ENCODE measurements at regions of chr12 and their contacts with region 1.

Region 1: DNA sequence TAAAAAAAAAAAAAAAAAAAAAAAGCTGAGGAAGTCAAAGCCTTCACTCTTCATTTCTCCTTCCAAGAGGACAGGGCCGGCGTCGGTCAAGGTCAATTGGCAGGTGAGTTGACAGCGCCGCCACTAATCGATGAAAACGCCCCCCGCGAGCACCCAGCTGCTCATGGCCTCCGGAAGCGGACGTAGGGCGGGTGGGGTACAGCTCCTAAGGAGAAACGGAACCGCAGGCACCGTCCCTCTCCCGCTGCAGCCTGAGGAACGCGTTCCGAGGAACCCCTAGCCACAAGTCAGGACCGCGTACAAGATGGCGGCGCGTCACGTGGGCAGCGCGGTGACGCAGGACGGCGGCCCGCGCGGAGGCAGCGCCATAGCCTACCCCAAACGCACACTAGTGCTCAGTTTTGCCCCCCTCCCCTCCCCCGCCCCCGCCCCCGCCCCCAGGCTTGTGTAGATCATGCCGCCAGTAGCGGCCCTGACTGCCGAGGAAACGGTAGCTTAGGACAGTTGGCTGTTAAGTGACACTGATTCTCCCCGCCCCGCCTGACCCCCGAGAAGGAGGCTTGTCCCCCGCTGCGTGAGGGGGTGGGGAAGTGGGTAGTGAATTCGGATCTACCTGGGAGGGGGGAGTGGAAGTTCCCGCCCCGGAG is at the start of gene ATF1:
- DNase-seq: peak; percentile 93 to 94 (median 93)
- H3K4me3 ChIP-seq: peak within 1 kb of the TSS; percentile 72 to 97 (median 91)
- H3K4me3 Mint-ChIP-seq: peak within 1 kb of the TSS; percentile 90 to 94
- H3K27ac ChIP-seq: peak within 1 kb of the TSS; percentile 92 to 99
- H3K27ac Mint-ChIP-seq: peak within 1 kb of the TSS; percentile 96 to 99 (median 99)
- H3K4me1 ChIP-seq: peaks cover 33 to 48% of the 10 kb centered on the region in 2 donors
- H3K4me1 Mint-ChIP-seq: peaks cover 36% of the 10 kb centered on the region
- H3K27me3 ChIP-seq: no peaks in the 10 kb centered on the region
- H3K27me3 Mint-ChIP-seq: peaks cover 0 to 2% (median 1%) of the 10 kb centered on the region in 3 donors
- CTCF ChIP-seq: no peak
- polyA plus RNA-seq, gene ATF1: 12.6 to 21.9 (median 21.5) TPM

Region 2: DNA sequence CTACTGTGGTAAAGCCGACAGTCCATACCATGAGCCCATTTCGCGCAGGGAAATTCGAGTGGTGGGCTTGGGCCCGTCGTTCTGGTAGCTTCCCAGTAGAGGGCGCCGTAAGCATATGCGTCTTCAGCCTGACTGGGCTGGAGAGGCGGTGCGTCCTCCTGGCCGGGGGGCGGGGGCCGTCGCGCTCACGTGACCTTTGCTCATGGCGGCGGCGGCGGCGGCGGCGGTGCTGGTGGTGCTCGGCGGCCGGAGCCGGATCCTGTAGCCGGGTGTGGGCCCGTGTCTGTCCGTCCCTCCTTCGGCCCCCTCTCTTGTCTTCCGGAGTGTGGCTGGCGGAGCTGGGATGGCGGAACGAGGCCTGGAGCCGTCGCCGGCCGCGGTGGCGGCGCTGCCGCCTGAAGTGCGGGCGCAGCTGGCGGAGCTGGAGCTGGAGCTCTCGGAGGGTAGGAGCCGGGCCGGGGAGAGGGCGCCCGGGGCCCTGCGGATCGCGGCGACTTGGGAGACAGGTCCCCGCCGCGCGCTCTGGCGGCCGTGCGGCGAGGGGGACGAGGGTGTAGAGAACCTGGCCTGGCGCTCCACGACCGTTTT is 258.9 kb before region 1 on chr12 and contains the start of gene DIP2B:
- intact Hi-C with region 1: loop called in 1 of 2 experiments (anchors 10 kb)
- DNase-seq: peak; percentile 91 to 95 (median 94)
- H3K4me3 ChIP-seq: peak within 1 kb of the TSS; percentile 70 to 95 (median 93)
- H3K4me3 Mint-ChIP-seq: peak within 1 kb of the TSS; percentile 91 to 97
- H3K27ac ChIP-seq: peak within 1 kb of the TSS; percentile 82 to 92
- H3K27ac Mint-ChIP-seq: peak within 1 kb of the TSS; percentile 89 to 96 (median 93)
- H3K4me1 ChIP-seq: peaks cover 43 to 45% of the 10 kb centered on the region in 2 donors
- H3K4me1 Mint-ChIP-seq: peaks cover 44% of the 10 kb centered on the region
- H3K27me3 ChIP-seq: no peaks in the 10 kb centered on the region
- H3K27me3 Mint-ChIP-seq: no peaks in the 10 kb centered on the region
- CTCF ChIP-seq: peak; percentile 90
- polyA plus RNA-seq, gene DIP2B: 3.5 to 12.3 (median 6.5) TPM

Region 3: DNA sequence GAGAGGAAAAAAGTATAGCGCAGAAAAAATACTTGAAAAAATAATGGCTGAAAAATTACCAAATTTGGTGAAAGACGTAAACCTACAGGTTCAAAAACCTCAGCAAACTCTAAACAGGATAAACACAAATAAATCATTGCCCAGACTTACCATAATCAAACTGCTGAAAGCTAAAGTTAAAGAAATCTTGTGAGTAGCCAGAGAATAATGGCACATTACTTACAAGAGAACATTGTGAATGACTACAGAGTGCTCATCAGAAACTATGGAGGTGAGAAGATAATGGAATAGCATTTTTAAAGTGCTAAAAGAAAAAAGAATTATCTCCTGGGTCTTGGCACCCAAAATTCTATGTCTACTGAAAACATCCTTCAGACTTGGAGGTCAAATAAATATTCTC is 36.1 kb after region 1 on chr12:
- intact Hi-C with region 1: no loop called
- DNase-seq: no peak
- H3K4me3 ChIP-seq: no peak overlapping the region
- H3K4me3 Mint-ChIP-seq: no peak overlapping the region
- H3K27ac ChIP-seq: no peak overlapping the region
- H3K27ac Mint-ChIP-seq: no peak overlapping the region
- H3K4me1 ChIP-seq: no peaks in the 10 kb centered on the region
- H3K4me1 Mint-ChIP-seq: no peaks in the 10 kb centered on the region
- H3K27me3 ChIP-seq: no peaks in the 10 kb centered on the region
- H3K27me3 Mint-ChIP-seq: peaks cover 0 to 1% (median 0%) of the 10 kb centered on the region in 3 donors
- CTCF ChIP-seq: no peak

Region 4: GRCh38 chr12:50822082-50822481 is 58.3 kb after region 1 on chr12:
- intact Hi-C with region 1: no loop called
- DNase-seq: no peak
- H3K4me3 ChIP-seq: no peak overlapping the region
- H3K4me3 Mint-ChIP-seq: no peak overlapping the region
- H3K27ac ChIP-seq: no peak overlapping the region
- H3K27ac Mint-ChIP-seq: peak overlapping the region in 1 of 7 donors; percentile 75
- H3K4me1 ChIP-seq: peaks cover 0 to 3% of the 10 kb centered on the region in 2 donors
- H3K4me1 Mint-ChIP-seq: peaks cover 5% of the 10 kb centered on the region
- H3K27me3 ChIP-seq: no peaks in the 10 kb centered on the region
- H3K27me3 Mint-ChIP-seq: no peaks in the 10 kb centered on the region
- CTCF ChIP-seq: no peak

Region 5: DNA sequence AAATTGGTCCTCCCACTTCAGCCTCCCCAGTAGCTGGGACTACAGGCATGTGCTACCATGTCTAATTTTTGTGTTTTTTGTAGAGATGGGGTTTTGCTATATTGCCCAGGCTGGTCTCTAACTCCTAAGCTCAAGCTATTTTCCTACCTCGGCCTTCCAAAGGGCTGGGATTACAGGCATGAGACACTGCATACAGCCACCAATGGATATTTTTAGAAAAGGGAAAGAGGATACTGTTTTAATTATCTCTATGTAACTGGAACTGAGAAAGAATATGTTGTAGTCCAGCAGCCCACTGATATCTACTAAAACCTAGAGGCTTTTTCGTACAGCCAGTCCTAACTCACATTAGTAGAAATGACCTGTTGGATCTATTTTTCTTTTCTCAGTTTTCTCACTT is 85.2 kb after region 1 on chr12:
- intact Hi-C with region 1: no loop called
- DNase-seq: no peak
- H3K4me3 ChIP-seq: no peak overlapping the region
- H3K4me3 Mint-ChIP-seq: no peak overlapping the region
- H3K27ac ChIP-seq: no peak overlapping the region
- H3K27ac Mint-ChIP-seq: no peak overlapping the region
- H3K4me1 ChIP-seq: no peaks in the 10 kb centered on the region
- H3K4me1 Mint-ChIP-seq: no peaks in the 10 kb centered on the region
- H3K27me3 ChIP-seq: no peaks in the 10 kb centered on the region
- H3K27me3 Mint-ChIP-seq: peaks cover 0 to 5% (median 2%) of the 10 kb centered on the region in 3 donors
- CTCF ChIP-seq: no peak

Region 6: DNA sequence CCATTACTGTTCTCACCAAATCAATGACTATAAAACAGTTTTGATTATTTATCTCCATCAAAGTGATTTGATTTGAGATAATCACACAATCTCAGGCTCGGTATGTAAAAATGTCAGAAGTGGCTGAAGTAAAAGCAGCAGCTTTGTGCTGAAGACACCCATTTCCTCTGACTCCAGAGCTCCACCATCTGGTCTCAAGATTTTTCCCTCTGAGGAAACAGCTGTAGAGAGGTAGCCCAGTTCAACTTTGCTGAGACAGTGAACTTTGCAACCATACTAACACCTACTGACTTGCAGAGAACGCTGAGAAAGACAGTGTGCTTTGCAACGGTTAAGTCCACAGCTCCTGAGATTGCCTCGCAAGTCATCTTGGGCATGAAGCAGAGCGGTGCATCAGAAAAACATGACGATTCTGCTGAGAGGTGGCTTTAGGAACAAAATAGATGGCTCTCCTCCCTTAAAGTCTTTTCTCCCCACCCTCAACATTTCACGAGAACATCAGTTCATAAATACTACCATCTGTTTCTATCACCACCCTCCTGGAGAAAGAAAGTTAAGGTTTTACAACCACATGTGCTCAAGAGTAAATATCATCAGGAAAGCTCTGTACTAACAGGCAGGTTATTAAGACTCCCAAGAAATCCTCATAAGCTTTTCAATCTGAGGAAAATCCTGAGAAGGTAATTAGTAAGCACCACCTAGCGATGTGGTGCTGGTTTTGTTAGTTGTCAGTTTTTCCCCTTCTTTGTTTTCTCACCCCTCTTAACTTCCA is 223.4 kb after region 1 on chr12:
- intact Hi-C with region 1: no loop called
- DNase-seq: peak in 2 of 3 donors; percentile 6 to 18
- H3K4me3 ChIP-seq: no peak overlapping the region
- H3K4me3 Mint-ChIP-seq: no peak overlapping the region
- H3K27ac ChIP-seq: peak overlapping the region in 1 of 2 donors; percentile 8
- H3K27ac Mint-ChIP-seq: peak overlapping the region in 2 of 7 donors; percentile 50 to 73
- H3K4me1 ChIP-seq: no peaks in the 10 kb centered on the region
- H3K4me1 Mint-ChIP-seq: no peaks in the 10 kb centered on the region
- H3K27me3 ChIP-seq: no peaks in the 10 kb centered on the region
- H3K27me3 Mint-ChIP-seq: peaks cover 0 to 3% (median 0%) of the 10 kb centered on the region in 3 donors
- CTCF ChIP-seq: peak; percentile 31

Region 7: GRCh38 chr12:51025836-51026638 is 262.3 kb after region 1 on chr12 and contains the start of gene SLC11A2:
- intact Hi-C with region 1: loop called in 1 of 2 experiments (anchors 2 kb)
- DNase-seq: peak; percentile 88 to 95 (median 91)
- H3K4me3 ChIP-seq: peak within 1 kb of the TSS; percentile 48 to 93 (median 74)
- H3K4me3 Mint-ChIP-seq: peak within 1 kb of the TSS; percentile 94 to 98
- H3K27ac ChIP-seq: peak within 1 kb of the TSS; percentile 65 to 88
- H3K27ac Mint-ChIP-seq: peak within 1 kb of the TSS; percentile 95 to 99 (median 97)
- H3K4me1 ChIP-seq: peaks cover 46 to 68% of the 10 kb centered on the region in 2 donors
- H3K4me1 Mint-ChIP-seq: peaks cover 62% of the 10 kb centered on the region
- H3K27me3 ChIP-seq: no peaks in the 10 kb centered on the region
- H3K27me3 Mint-ChIP-seq: peaks cover 3 to 5% (median 3%) of the 10 kb centered on the region in 3 donors
- CTCF ChIP-seq: peak; percentile 18
- polyA plus RNA-seq, gene SLC11A2: 11.7 to 69.0 (median 14.9) TPM

Region 8: DNA sequence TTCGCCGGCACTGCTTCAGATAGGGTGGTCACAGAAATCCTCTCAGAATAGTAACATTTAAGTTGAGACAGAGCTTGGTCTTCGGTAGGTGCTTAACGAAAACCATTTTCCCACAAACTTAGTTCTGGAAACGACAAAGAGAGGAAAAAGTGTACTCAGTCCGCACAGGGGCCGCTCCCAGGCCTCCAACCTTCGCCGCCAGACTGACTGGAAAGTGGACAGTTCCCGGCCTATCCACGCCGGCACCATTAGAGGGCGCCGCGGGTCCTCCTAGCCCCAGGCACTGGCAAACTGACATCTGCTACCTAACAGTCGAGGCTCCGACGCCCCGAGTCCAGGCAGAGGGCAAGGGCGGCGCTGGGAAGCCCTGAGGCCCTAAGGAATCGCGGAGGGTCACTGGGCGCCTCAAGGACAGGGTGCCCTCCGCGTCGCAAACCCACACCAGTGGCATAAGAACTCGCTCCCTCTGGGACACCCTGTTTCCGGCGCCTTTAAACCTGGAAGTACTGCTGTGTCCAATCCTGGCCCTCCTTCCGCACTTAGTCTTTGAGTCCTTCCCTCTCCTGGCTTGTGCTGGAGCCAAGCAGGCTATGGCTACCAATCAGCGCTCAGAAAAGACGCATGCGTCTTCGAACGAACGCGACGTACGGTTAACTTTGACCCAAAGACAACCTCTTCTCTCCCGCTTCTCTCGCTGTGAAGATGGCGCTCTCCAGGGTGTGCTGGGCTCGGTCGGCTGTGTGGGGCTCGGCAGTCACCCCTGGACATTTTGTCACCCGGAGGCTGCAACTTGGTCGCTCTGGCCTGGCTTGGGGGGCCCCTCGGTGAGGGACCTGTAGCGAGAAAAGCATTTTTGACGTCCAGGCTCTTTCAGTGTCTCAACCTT is 284.1 kb after region 1 on chr12 and contains the start of gene LETMD1:
- intact Hi-C with region 1: loop called in 1 of 2 experiments (anchors 5 kb)
- DNase-seq: peak; percentile 94 to 98 (median 97)
- H3K4me3 ChIP-seq: peak within 1 kb of the TSS; percentile 67 to 88 (median 85)
- H3K4me3 Mint-ChIP-seq: peak within 1 kb of the TSS; percentile 93 to 98
- H3K27ac ChIP-seq: peak within 1 kb of the TSS; percentile 90
- H3K27ac Mint-ChIP-seq: peak within 1 kb of the TSS; percentile 87 to 97 (median 94)
- H3K4me1 ChIP-seq: peaks cover 18 to 22% of the 10 kb centered on the region in 2 donors
- H3K4me1 Mint-ChIP-seq: peaks cover 19% of the 10 kb centered on the region
- H3K27me3 ChIP-seq: no peaks in the 10 kb centered on the region
- H3K27me3 Mint-ChIP-seq: peaks cover 0 to 5% (median 0%) of the 10 kb centered on the region in 3 donors
- CTCF ChIP-seq: peak; percentile 92
- polyA plus RNA-seq, gene LETMD1: 13.2 to 95.6 (median 16.8) TPM

Region 9: GRCh38 chr12:51083126-51083833 is 319.5 kb after region 1 on chr12 and contains the start of gene CSRNP2:
- intact Hi-C with region 1: loop called in 1 of 2 experiments (anchors 10 kb)
- DNase-seq: peak; percentile 90 to 92 (median 91)
- H3K4me3 ChIP-seq: peak within 1 kb of the TSS; percentile 72 to 97 (median 74)
- H3K4me3 Mint-ChIP-seq: peak within 1 kb of the TSS; percentile 98 to 100
- H3K27ac ChIP-seq: peak within 1 kb of the TSS in 1 of 2 donors; percentile 74
- H3K27ac Mint-ChIP-seq: peak within 1 kb of the TSS; percentile 45 to 90 (median 82)
- H3K4me1 ChIP-seq: peaks cover 26 to 38% of the 10 kb centered on the region in 2 donors
- H3K4me1 Mint-ChIP-seq: peaks cover 33% of the 10 kb centered on the region
- H3K27me3 ChIP-seq: no peaks in the 10 kb centered on the region
- H3K27me3 Mint-ChIP-seq: no peaks in the 10 kb centered on the region
- CTCF ChIP-seq: peak; percentile 9
- polyA plus RNA-seq, gene CSRNP2: 1.7 to 8.0 (median 2.6) TPM